Activated T-helper 2 cell treated with anti-CD3 and anti-CD28 coated beads, Interferon-gamma antibody, Interleukin-2, Interleukin-4, amounts not matched to agents 10 μg/mL and 5 μg/mL and 100 μg/mL, durations not matched to agents 14 hours and 24 hours and 36 hours (primary cell): ENCODE measurements at regions of chr12 and their contacts with region 1.

Region 1: GRCh38 chr12:57124259-57124877 is 3.9 kb upstream of the LRP1 start:
- DNase-seq: peak; percentile 68
- H3K4me3 Mint-ChIP-seq: no peak overlapping the region
- H3K27ac Mint-ChIP-seq: no peak overlapping the region
- H3K4me1 Mint-ChIP-seq: peaks cover 7% of the 10 kb centered on the region
- H3K27me3 Mint-ChIP-seq: peaks cover 24% of the 10 kb centered on the region

Region 2: DNA sequence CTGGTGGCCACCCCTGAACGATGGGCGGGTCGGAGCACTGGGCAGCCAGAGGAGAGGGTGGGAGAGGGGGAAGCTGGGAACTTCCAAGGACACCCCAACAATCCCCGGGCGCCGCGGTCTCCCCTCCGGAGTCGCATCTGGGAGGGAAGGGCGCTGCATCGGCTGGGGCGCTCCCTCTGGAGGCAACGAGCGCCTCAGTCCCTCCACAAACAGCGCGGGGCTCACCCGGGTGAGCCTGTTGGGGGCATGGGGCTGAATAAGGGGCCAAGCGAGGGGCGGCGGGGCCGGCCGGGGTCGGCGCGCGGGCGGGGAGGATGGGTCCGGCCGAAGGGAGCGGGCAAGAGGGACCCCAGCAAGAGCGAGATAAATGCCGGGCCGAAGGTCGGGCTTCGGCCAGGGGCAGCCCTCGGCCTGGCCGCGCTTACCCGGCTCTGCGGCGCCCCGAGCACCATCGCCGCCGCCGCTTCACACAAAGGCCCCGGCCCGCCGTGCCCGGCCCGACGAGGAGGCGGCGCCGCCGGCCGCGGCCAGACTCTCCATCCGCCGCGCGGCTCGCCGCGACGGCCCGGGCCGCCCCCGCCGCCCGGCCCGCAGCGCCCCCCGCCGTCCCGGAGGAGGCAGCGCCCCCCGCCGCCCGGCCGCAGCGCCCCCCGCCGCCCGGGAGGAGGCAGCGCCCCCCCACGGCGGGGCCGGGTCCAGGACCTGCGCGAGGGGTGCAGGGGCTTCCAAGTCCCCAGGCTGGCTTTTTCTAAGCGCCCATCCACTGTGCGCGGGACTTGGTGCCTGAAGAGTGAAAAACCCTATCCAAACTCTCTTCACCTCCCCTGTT is 118.2 kb before region 1 on chr12 and contains the start of gene ZBTB39:
- intact Hi-C with region 1: loop called (anchors 5 kb)
- DNase-seq: peak; percentile 60
- H3K4me3 Mint-ChIP-seq: peak within 1 kb of the TSS; percentile 95
- H3K27ac Mint-ChIP-seq: peak within 1 kb of the TSS; percentile 89
- H3K4me1 Mint-ChIP-seq: peaks cover 39% of the 10 kb centered on the region
- H3K27me3 Mint-ChIP-seq: no peaks in the 10 kb centered on the region
- total RNA-seq, gene ZBTB39: 10.5 and 10.6 TPM in 2 replicates

Region 3: DNA sequence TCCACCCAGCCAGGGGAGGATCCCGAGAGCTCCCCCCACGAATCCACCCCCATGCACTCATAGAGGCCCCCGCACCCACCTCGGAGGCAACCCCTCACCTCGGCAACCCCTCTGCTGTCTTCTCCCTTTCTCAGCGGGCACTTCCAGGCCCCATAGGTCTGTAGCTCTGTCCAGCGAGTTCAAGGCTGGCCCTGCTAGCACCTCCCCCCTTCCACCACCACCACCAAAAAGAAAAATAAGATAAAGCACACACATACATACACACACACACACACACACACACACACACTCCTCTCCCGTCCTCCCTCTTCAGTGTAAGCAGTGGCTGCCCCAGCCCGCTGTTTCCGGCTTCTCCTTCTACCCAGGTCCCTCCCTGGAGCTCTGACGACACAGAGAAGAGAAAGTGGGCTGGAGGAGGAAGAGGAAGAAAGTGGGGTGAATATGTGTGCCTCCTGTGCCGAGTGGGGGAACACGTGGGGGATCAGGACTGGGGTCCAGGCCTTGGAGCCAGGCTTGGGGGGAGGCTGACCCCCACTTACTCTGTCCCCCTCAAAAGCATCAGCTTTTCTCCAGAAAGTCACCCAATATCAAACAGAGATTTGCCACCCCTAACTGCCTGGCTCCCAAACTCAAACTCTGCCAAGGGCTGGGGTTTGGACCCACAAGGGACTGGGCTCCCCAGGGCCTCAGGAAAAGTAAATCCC is 13.2 kb before region 1 on chr12 and contains the start of gene STAT6:
- intact Hi-C with region 1: no loop called
- DNase-seq: peak; percentile 83
- H3K4me3 Mint-ChIP-seq: peak within 1 kb of the TSS; percentile 94
- H3K27ac Mint-ChIP-seq: peak within 1 kb of the TSS; percentile 95
- H3K4me1 Mint-ChIP-seq: peaks cover 37% of the 10 kb centered on the region
- H3K27me3 Mint-ChIP-seq: peaks cover under 1% of the 10 kb centered on the region
- total RNA-seq, gene STAT6: 333 and 341 TPM in 2 replicates

Region 4: DNA sequence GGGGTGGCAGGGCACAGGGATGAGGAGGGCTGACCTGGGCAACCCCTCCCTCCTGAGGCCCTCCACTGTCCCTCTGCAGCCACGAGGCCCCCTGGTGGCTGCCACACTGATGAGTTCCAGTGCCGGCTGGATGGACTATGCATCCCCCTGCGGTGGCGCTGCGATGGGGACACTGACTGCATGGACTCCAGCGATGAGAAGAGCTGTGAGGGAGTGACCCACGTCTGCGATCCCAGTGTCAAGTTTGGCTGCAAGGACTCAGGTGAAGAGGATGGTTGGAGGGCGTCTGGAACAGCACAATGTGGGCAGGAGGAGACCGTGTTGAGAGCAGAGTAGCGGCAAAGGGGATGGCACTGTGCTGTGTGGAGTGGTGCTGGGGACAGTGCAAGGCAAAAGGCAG is 48.7 kb after region 1 on chr12:
- intact Hi-C with region 1: loop called (anchors 2 kb)
- DNase-seq: no peak
- H3K4me3 Mint-ChIP-seq: no peak overlapping the region
- H3K27ac Mint-ChIP-seq: no peak overlapping the region
- H3K4me1 Mint-ChIP-seq: no peaks in the 10 kb centered on the region
- H3K27me3 Mint-ChIP-seq: no peaks in the 10 kb centered on the region